OCI-LY7 (cell line): ENCODE measurements at regions of chr2 and their contacts with region 1.

Region 1: DNA sequence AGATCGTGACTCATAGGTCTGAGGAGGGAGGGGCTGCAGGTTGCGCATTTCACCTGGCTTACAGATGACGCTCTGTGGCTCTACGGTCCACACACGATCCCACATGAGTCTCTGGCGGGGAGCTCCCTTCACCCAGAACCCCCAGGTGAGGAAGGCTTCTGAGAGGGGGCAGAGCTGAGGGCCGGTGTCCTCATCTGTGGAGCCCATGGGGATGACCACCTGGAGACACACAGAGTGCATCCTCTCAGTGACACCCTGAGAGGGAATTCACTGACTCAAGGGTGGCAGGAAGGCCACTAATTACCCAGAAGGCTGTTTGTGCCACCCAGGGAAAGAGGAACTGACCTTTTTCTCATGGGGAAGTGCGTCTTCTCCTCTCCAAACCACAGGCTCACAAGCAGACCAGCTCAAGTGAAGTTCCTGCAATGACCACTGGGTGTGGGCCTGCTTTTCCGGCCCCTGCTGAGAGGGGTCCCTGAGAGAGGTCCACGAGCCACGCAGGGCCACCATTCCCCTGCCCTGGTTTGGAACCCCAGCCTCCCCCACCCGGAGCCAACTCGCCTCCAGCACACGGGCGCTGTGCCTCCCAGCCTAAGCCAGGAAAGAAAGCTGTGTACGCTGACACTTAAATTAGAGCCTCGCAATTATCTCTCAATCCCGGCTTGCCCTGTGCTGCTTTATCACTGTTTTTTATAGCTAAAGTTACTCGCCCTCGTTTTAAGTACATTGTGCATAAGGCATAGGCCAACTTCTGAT is 114.1 kb downstream of the BCL11A start:
- DNase-seq: peak; percentile 96
- H3K4me3 ChIP-seq: peak overlapping the region; percentile 41
- H3K27ac ChIP-seq: peak overlapping the region; percentile 65
- H3K4me1 ChIP-seq: peaks cover 66% of the 10 kb centered on the region
- CTCF ChIP-seq: peak; percentile 77

Region 2: DNA sequence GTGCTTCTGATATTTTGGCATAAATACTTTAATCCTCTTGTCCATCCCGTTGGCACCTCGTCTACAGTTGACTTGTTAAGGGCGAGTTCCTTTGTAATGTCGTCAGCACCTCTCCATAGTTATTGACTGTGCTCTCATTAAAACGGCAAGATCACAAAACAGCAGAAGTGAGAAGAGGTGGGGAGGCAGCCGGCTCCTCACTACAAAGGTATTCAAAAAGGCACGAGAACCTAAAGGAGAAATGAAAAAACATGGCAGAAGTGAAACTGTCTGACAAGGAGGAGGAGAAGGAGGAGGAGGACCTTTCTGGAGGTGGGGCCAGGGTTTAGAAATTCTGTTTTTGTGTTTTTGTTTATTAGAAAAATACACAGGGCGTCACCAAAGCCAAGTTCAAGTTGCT is 121.6 kb before region 1 on chr2:
- CTCF ChIA-PET with region 1: no interaction called
- POLR2A ChIA-PET with region 1: interaction called, 10 read pairs
- intact Hi-C with region 1: no loop called
- DNase-seq: peak; percentile 92
- H3K4me3 ChIP-seq: peak overlapping the region; percentile 47
- H3K27ac ChIP-seq: peak overlapping the region; percentile 92
- H3K4me1 ChIP-seq: peaks cover 86% of the 10 kb centered on the region
- CTCF ChIP-seq: no peak

Region 3: GRCh38 chr2:60366135-60366712 is 73.2 kb before region 1 on chr2:
- CTCF ChIA-PET with region 1: interaction called, 7 read pairs
- POLR2A ChIA-PET with region 1: interaction called, 15 read pairs
- intact Hi-C with region 1: loop called (anchors 2 kb)
- DNase-seq: peak; percentile 89
- H3K4me3 ChIP-seq: peak overlapping the region; percentile 35
- H3K27ac ChIP-seq: peak overlapping the region; percentile 85
- H3K4me1 ChIP-seq: peaks cover 100% of the 10 kb centered on the region
- CTCF ChIP-seq: no peak

Region 4: GRCh38 chr2:60413814-60414168 is 25.6 kb before region 1 on chr2:
- CTCF ChIA-PET with region 1: interaction called, 3 read pairs
- POLR2A ChIA-PET with region 1: interaction called, 3 read pairs
- intact Hi-C with region 1: loop called (anchors 1 kb)
- DNase-seq: peak; percentile 81
- H3K4me3 ChIP-seq: no peak overlapping the region
- H3K27ac ChIP-seq: peak overlapping the region; percentile 39
- H3K4me1 ChIP-seq: peaks cover 46% of the 10 kb centered on the region
- CTCF ChIP-seq: no peak

Region 5: GRCh38 chr2:60424233-60424632 is 15.2 kb before region 1 on chr2:
- CTCF ChIA-PET with region 1: interaction called, 3 read pairs
- POLR2A ChIA-PET with region 1: interaction called, 11 read pairs
- intact Hi-C with region 1: no loop called
- DNase-seq: no peak
- H3K4me3 ChIP-seq: no peak overlapping the region
- H3K27ac ChIP-seq: no peak overlapping the region
- H3K4me1 ChIP-seq: no peaks in the 10 kb centered on the region
- CTCF ChIP-seq: no peak

Region 6: GRCh38 chr2:60530660-60531281 is 91.4 kb after region 1 on chr2:
- CTCF ChIA-PET with region 1: interaction called, 3 read pairs
- POLR2A ChIA-PET with region 1: no interaction called
- intact Hi-C with region 1: loop called (anchors 5 kb)
- DNase-seq: peak; percentile 45
- H3K4me3 ChIP-seq: peak overlapping the region; percentile 12
- H3K27ac ChIP-seq: peak overlapping the region; percentile 7
- H3K4me1 ChIP-seq: peaks cover 74% of the 10 kb centered on the region
- CTCF ChIP-seq: no peak

Region 7: GRCh38 chr2:60544062-60544461 is 104.7 kb after region 1 on chr2:
- CTCF ChIA-PET with region 1: interaction called, 5 read pairs
- POLR2A ChIA-PET with region 1: interaction called, 11 read pairs
- intact Hi-C with region 1: loop called (anchors 2 kb)
- DNase-seq: no peak
- H3K4me3 ChIP-seq: peak overlapping the region; percentile 93
- H3K27ac ChIP-seq: peak overlapping the region; percentile 90
- H3K4me1 ChIP-seq: peaks cover 81% of the 10 kb centered on the region
- CTCF ChIP-seq: no peak